ENCODE measurements at regions of chr12 and their contacts with region 1.

Region 1: GRCh38 chr12:120356567-120357030 is 12.4 kb downstream of the MSI1 start:
- DNase-seq: peak; percentile 63 to 85 (median 76)
- ATAC-seq: peak; percentile 95
- H3K4me3 ChIP-seq: no peak overlapping the region
- H3K4me1 ChIP-seq: no peaks in the 10 kb centered on the region
- CTCF ChIP-seq: peak; percentile 76

Region 2: DNA sequence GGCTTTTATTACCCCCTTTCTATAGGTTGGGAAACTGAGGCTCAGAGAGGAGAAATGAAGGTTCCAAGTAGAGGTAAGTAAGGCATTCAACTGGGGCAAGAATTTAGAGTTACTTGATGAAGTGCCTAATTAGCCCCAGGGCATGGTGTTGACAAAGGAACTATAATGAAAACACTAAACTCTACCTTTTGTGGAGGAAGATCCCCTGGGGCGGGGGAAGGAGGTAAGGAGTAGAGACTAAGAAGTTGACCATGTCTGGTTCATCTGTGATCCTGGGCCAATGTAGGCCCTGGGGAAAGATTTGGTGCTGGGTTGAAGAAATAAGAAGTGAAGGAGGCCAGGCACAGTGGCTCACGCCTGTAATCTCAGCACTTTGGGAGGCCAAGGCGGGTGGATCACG is 65.1 kb after region 1 on chr12:
- intact Hi-C with region 1: no loop called
- DNase-seq: no peak
- ATAC-seq: no peak
- H3K4me3 ChIP-seq: no peak overlapping the region
- H3K4me1 ChIP-seq: no peaks in the 10 kb centered on the region
- CTCF ChIP-seq: no peak

Region 3: GRCh38 chr12:120432772-120433525 is 76.3 kb after region 1 on chr12:
- intact Hi-C with region 1: loop called (anchors 5 kb)
- DNase-seq: peak in 1 of 3 donors; percentile 9
- ATAC-seq: no peak
- H3K4me3 ChIP-seq: no peak overlapping the region
- H3K4me1 ChIP-seq: peaks cover 8% of the 10 kb centered on the region
- CTCF ChIP-seq: no peak

Region 4: DNA sequence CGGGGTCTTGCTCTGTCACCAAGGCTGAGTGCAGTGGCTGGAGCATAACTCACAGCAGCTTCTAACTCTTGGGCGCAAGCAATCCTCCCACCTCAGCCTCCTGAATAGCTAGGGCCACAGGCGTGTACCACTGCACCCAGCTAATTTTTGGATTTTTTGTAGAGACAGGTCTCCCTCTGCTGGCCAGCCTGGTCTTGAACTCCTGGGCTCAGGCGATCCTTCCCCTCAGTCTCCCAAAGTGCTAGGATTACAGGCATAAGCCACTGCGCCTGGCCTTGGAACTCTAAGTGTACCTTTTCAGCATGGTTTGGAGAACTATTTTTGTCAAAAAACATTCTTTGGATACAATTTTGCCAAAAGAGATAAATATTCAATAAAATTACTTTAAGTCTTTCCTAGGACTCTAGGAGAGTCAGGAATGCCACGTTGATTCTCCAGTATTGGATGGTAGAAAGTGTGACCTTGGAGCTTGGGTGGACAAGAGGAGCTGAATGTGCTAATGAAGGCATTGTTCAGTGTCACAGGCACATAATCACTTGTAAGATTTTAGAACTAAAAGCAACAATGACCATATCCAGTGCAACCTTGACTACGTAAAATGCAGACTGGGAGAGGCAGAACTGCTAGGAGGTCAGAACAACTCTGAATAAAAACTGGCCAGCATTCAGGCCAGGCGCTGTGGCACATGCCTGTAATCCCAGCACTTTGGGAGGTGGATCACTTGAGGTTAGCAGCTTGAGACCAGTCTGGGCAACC is 110.1 kb after region 1 on chr12:
- intact Hi-C with region 1: no loop called
- DNase-seq: peak in 2 of 3 donors; percentile 45 to 47
- ATAC-seq: no peak
- H3K4me3 ChIP-seq: no peak overlapping the region
- H3K4me1 ChIP-seq: peaks cover 10% of the 10 kb centered on the region
- CTCF ChIP-seq: peak; percentile 27